Activated T-helper 1 cell treated with anti-CD3 and anti-CD28 coated beads, Interleukin-12 subunit alpha, Interleukin-12 subunit beta, Interleukin-2, Interleukin-4 antibody, amounts not matched to agents 30 ng/mL and 10 ng/mL and 1 ng/mL, durations not matched to agents 14 hours and 24 hours and 36 hours (primary cell): ENCODE measurements at regions of chr6 and their contacts with region 1.

Region 1: GRCh38 chr6:16657768-16658167 is 103.5 kb downstream of the ATXN1 start:
- DNase-seq: no peak
- H3K4me3 Mint-ChIP-seq: peak overlapping the region; percentile 70
- H3K27ac Mint-ChIP-seq: peak overlapping the region; percentile 88
- H3K4me1 Mint-ChIP-seq: peaks cover 64% of the 10 kb centered on the region
- H3K27me3 Mint-ChIP-seq: no peaks in the 10 kb centered on the region

Region 2: DNA sequence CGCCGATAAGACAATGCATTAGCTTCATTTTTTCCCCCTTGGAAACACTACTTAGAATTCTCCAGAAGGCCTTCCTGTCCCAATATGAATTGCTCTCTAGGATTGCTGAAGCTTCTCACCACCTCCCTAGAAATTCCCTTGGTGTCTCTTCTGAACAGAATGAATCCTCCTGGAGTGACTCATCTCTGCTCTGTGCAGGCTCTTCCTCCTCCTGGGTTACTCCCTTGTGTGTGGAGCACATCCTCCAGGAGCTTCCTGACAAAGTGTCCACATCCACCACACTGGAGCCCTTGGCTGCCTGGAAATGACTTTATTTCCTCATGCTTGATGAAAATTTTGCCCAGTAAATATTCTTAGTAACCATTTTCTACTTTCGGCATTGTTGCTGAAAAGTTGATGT is 1049.4 kb before region 1 on chr6:
- intact Hi-C with region 1: no loop called
- DNase-seq: no peak
- H3K4me3 Mint-ChIP-seq: no peak overlapping the region
- H3K27ac Mint-ChIP-seq: no peak overlapping the region
- H3K4me1 Mint-ChIP-seq: peaks cover 14% of the 10 kb centered on the region
- H3K27me3 Mint-ChIP-seq: no peaks in the 10 kb centered on the region

Region 3: GRCh38 chr6:16438718-16439591 is 218.8 kb before region 1 on chr6:
- intact Hi-C with region 1: loop called (anchors 1 kb)
- DNase-seq: no peak
- H3K4me3 Mint-ChIP-seq: peak overlapping the region; percentile 51
- H3K27ac Mint-ChIP-seq: peak overlapping the region; percentile 79
- H3K4me1 Mint-ChIP-seq: peaks cover 81% of the 10 kb centered on the region
- H3K27me3 Mint-ChIP-seq: no peaks in the 10 kb centered on the region

Region 4: DNA sequence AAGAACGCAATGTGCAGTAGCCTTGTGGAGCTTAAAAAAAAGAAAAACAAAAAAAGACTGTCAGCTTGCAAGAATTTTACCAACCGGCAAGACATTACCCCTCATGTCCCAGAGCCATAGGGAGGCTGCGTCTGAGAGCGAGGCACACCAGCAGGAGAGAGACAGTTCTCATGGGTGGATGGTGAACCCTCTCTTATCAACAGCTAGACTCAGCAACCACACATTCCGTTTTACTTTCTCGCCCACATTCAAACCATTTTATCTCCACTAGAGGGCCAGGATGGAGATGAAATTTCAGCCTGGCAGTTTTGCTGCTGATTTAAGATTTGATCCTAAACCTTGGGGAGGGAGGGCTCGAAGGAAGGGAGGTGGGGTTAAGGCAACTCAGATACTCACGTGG is 143.5 kb before region 1 on chr6:
- intact Hi-C with region 1: loop called (anchors 2 kb)
- DNase-seq: peak; percentile 28
- H3K4me3 Mint-ChIP-seq: peak overlapping the region; percentile 45
- H3K27ac Mint-ChIP-seq: peak overlapping the region; percentile 60
- H3K4me1 Mint-ChIP-seq: peaks cover 78% of the 10 kb centered on the region
- H3K27me3 Mint-ChIP-seq: no peaks in the 10 kb centered on the region

Region 5: GRCh38 chr6:16602035-16602434 is 55.7 kb before region 1 on chr6:
- intact Hi-C with region 1: loop called (anchors 1 kb)
- DNase-seq: no peak
- H3K4me3 Mint-ChIP-seq: peak overlapping the region; percentile 28
- H3K27ac Mint-ChIP-seq: peak overlapping the region; percentile 75
- H3K4me1 Mint-ChIP-seq: peaks cover 49% of the 10 kb centered on the region
- H3K27me3 Mint-ChIP-seq: no peaks in the 10 kb centered on the region

Region 6: GRCh38 chr6:16690608-16691198 is 32.9 kb after region 1 on chr6:
- intact Hi-C with region 1: loop called (anchors 1 kb)
- DNase-seq: no peak
- H3K4me3 Mint-ChIP-seq: peak overlapping the region; percentile 70
- H3K27ac Mint-ChIP-seq: peak overlapping the region; percentile 98
- H3K4me1 Mint-ChIP-seq: peaks cover 90% of the 10 kb centered on the region
- H3K27me3 Mint-ChIP-seq: no peaks in the 10 kb centered on the region

Region 7: GRCh38 chr6:16731478-16732051 is 73.8 kb after region 1 on chr6:
- intact Hi-C with region 1: loop called (anchors 1 kb)
- DNase-seq: peak; percentile 36
- H3K4me3 Mint-ChIP-seq: peak overlapping the region; percentile 51
- H3K27ac Mint-ChIP-seq: peak overlapping the region; percentile 89
- H3K4me1 Mint-ChIP-seq: peaks cover 71% of the 10 kb centered on the region
- H3K27me3 Mint-ChIP-seq: no peaks in the 10 kb centered on the region